ENCODE measurements at regions of chr3 and their contacts with region 1.

Region 1: GRCh38 chr3:11335056-11335608 is 62.9 kb downstream of the ATG7 start:
- DNase-seq: peak; percentile 81
- H3K4me3 ChIP-seq: no peak overlapping the region
- H3K27ac ChIP-seq: no peak overlapping the region
- H3K4me1 ChIP-seq: peaks cover 15% of the 10 kb centered on the region
- H3K27me3 ChIP-seq: no peaks in the 10 kb centered on the region
- CTCF ChIP-seq: peak; percentile 41 to 56
- POLR2A ChIP-seq: no peak

Region 2: GRCh38 chr3:11221818-11222415 is 113.2 kb before region 1 on chr3:
- CTCF ChIA-PET with region 1: interaction called, 10 read pairs
- POLR2A ChIA-PET with region 1: no interaction called
- dilution Hi-C with region 1: no loop called
- intact Hi-C with region 1: no loop called
- DNase-seq: no peak
- H3K4me3 ChIP-seq: no peak overlapping the region
- H3K27ac ChIP-seq: no peak overlapping the region
- H3K4me1 ChIP-seq: peaks cover 40% of the 10 kb centered on the region
- H3K27me3 ChIP-seq: no peaks in the 10 kb centered on the region
- CTCF ChIP-seq: peak; percentile 5 to 11
- POLR2A ChIP-seq: no peak

Region 3: DNA sequence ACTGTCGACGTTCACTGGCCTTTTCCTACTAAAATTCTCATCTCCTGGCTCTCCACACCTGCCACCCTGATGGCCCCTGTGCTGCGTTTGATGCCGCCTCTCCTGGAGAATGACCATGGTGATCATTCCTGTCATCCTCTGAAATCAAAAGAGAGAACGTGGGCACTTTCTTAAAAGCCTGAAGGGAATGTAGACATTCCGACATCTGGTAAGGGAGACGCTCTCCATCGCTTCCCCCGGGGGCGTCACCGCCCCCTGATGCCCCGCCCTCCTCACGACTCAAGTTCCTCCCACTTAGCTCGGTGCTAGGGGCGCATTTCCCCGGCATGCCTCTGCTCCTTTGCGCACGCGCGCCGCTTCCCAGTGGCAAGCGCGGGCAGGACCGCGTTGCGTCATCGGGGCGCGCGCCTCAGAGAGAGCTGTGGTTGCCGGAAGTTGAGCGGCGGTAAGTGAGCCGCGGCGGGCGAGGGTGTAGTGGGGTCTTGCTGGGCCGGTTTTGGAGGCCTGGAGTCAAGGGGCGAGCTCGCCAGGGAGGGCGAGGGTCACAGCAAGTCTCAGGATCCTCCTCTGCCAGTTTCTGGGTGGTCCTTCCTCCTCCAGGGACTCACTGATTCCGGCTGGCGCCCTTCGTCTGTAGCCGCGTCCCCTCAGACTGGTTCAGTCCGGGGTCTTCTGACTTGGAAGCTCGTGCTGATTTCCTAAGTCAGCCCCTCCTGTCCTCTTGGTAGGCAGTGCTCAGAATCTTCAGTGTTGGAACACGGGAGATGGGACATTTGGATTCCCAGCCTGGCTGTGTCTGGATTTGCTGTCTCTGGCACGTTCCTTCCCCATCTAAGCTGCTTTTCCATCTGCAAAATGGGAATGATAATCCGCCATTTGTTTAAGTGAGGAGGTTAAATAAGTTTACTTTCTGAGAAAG is 62.9 kb before region 1 on chr3 and contains the start of gene ATG7:
- CTCF ChIA-PET with region 1: interaction called, 12 read pairs
- POLR2A ChIA-PET with region 1: no interaction called
- dilution Hi-C with region 1: no loop called
- intact Hi-C with region 1: loop called (anchors 1 kb)
- DNase-seq: peak; percentile 98
- H3K4me3 ChIP-seq: peak within 1 kb of the TSS; percentile 76 to 89 (median 88)
- H3K27ac ChIP-seq: peak within 1 kb of the TSS; percentile 89
- H3K4me1 ChIP-seq: peaks cover 15% of the 10 kb centered on the region
- H3K27me3 ChIP-seq: no peaks in the 10 kb centered on the region
- CTCF ChIP-seq: no peak
- POLR2A ChIP-seq: peak; percentile 89
- total RNA-seq, gene ATG7: 48.3 and 50.4 TPM in 2 replicates

Region 4: DNA sequence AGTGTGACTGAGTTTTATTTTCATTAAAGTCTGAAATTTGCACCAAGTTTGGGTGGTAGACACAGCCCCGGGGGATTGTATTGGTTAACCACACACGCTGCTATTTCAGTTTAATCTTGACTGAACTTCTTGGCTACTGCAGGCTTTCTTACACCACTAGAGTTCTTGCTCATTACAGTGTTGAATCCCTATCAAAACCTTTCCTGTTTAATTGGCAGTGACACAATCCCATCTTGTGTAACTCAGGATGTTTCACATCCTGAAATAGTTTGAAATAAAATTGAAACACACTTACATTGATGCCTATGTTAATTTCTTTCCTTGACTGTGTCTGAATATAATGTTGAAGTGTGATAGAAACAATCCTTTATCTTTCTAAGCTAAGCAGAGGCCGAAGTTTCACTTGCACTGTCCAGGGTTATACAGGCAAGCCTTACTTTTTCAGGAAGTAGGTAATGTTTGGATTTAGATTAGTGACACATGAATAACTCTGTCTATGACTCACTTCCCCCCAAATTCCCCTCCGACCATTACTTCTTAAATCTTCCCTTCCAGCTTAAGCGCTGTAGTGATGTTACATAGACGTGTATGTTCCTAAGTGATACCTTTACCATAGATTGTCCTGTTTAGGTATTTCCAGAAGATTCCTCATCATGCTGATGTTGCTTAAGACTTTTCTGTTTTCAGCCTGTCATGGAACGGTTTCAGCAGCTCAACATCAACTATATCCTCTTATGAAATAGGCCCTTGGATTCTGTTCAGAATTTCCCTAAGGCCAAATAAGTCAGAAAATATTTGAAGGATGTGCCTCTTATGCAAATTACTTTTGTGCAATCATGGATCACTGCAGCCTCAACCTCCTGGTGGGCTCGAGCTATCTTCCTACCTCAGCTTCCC is 46.1 kb before region 1 on chr3:
- CTCF ChIA-PET with region 1: interaction called, 14 read pairs
- POLR2A ChIA-PET with region 1: no interaction called
- dilution Hi-C with region 1: no loop called
- intact Hi-C with region 1: no loop called
- DNase-seq: peak; percentile 95
- H3K4me3 ChIP-seq: peak overlapping the region in 1 of 3 experiments; percentile 43
- H3K27ac ChIP-seq: peak overlapping the region; percentile 98
- H3K4me1 ChIP-seq: peaks cover 50% of the 10 kb centered on the region
- H3K27me3 ChIP-seq: no peaks in the 10 kb centered on the region
- CTCF ChIP-seq: no peak
- POLR2A ChIP-seq: peak; percentile 64

Region 5: DNA sequence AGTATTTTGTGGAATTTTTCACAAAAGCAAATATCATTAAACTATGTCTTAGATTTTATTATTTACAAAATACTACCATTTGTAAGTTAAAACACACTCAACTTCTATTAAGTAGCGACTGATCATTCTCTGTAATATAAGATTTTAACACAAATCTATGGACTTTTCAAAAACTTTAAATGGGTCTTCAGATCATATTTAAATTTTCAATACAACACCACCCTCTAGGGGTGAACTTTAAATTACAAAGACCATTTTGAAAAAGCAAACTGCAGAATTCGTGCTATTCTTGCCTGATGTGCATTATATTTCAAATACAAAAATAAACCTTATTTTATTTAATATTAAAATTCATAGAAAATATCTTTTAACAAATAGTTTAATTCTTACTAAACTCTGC is 316.8 kb after region 1 on chr3:
- CTCF ChIA-PET with region 1: interaction called, 12 read pairs
- POLR2A ChIA-PET with region 1: no interaction called
- dilution Hi-C with region 1: no loop called
- intact Hi-C with region 1: no loop called
- DNase-seq: peak; percentile 62
- H3K4me3 ChIP-seq: no peak overlapping the region
- H3K27ac ChIP-seq: no peak overlapping the region
- H3K4me1 ChIP-seq: peaks cover 3% of the 10 kb centered on the region
- H3K27me3 ChIP-seq: no peaks in the 10 kb centered on the region
- CTCF ChIP-seq: peak in 1 of 2 donors; percentile 16
- POLR2A ChIP-seq: no peak